ENCODE measurements at regions of chr1 and their contacts with region 1.

Region 1: DNA sequence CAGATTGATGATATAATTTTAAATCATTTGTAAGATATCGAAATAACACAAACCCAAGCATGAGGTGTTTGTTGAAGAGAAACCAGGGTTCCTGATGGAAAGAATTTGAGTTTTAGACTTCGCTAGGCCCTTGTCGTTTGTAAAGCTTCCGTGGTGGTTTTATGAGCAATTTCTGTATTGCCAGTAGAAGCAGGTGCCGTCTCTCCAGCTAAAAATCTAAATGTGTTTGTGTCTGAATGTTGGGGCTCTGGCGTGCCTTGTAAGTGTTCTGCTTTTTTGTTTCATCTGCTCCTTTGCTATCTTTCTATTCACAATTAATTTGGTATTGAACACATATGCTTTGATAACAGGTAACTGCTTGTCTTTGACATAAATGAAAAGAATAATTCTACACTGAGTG is 27.5 kb downstream of the CHRM3 start:
- DNase-seq: no peak
- H3K4me3 ChIP-seq: no peak overlapping the region
- H3K27ac ChIP-seq: no peak overlapping the region
- H3K4me1 ChIP-seq: no peaks in the 10 kb centered on the region
- H3K27me3 ChIP-seq: no peaks in the 10 kb centered on the region
- CTCF ChIP-seq: no peak

Region 2: GRCh38 chr1:239909898-239910297 is 496.0 kb after region 1 on chr1:
- CTCF ChIA-PET with region 1: no interaction called
- dilution Hi-C with region 1: no loop called
- in situ Hi-C with region 1: loop called in 1 of 2 experiments (anchors 10 kb)
- intact Hi-C with region 1: no loop called
- DNase-seq: no peak
- H3K4me3 ChIP-seq: no peak overlapping the region
- H3K27ac ChIP-seq: no peak overlapping the region
- H3K4me1 ChIP-seq: no peaks in the 10 kb centered on the region
- H3K27me3 ChIP-seq: no peaks in the 10 kb centered on the region
- CTCF ChIP-seq: no peak